ENCODE measurements at regions of chr18 and their contacts with region 1.

Region 1: DNA sequence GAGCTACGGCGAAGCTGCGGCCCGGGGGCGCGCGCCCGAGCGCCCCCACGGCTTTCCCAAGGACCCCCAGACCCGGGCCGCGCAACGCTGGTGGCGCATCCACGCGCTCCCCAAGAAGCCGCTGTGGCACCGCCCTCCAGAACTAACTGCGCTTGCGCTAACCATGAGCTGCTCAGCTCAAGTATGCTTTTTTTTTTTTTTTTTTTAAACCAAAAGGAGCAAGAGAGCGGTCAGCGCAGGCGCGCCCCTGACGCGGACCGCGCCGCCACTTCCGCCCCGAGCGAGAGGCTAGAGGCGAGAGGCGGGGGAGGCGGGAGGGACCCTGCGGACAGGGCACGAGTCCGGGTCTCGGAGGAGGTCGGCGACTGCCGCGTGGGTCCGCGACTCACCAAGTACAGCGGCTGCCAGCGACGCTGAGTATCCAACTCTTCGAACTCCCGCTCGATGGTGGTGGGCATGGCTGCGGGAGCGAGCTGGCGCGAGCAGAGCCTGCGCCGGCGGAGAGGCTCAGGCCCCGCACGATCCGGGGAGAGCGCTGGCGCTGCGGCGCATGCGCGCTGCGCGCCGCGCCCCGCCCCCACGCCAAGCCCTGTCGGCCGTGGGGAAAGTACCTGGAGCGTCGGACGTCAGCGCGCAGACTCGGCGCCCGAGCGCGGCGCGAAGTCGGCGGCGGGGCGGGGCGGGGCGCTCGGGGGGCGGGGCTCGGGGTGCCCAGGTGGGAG is at the start of gene PTPN2:
- DNase-seq: peak; percentile 94
- ATAC-seq: peak; percentile 78
- H3K4me3 Mint-ChIP-seq: peak within 1 kb of the TSS; percentile 94
- H3K27ac Mint-ChIP-seq: peak within 1 kb of the TSS; percentile 93
- H3K4me1 Mint-ChIP-seq: peaks cover 72% of the 10 kb centered on the region
- H3K27me3 Mint-ChIP-seq: no peaks in the 10 kb centered on the region
- CTCF ChIP-seq: no peak
- total RNA-seq, gene PTPN2: 66.4 and 76.5 TPM in 2 replicates

Region 2: DNA sequence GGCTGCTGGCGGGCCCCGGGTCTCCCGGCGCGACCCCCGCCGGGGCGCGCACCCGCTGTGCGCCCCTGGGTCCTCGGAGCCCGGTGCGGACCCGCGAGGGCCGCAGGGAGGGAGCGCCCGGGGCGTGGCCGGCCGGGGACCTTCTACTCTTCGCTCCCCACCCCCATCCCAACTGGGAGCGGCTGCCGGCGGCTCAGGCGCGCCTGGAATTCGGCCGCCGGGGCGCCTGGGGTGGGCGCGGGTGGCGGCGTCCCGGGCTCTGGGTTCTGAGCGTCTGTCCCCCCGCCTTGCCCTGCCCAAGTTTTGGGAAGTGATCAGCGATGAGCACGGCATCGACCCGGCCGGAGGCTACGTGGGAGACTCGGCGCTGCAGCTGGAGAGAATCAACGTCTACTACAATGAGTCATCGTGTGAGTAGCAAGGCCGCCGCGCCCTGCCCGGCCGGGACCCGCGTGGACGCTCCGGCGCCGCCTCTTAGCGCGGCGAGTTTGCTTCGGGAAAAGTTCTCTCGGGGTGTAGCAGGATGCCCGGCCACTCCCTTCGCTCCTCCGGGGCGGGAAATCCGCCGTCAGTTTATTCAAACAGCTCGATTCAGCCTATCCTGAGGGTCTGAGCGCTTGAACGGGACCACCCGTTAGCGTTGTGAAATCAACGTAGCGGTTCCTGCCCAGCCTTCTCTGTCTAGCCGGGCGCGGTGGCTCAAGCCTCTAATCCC is 575.3 kb before region 1 on chr18:
- CTCF ChIA-PET with region 1: no interaction called
- POLR2A ChIA-PET with region 1: interaction called, 4 read pairs
- intact Hi-C with region 1: loop called (anchors 5 kb)
- DNase-seq: peak; percentile 57
- ATAC-seq: peak; percentile 63
- H3K4me3 Mint-ChIP-seq: peak overlapping the region; percentile 85
- H3K27ac Mint-ChIP-seq: peak overlapping the region; percentile 69
- H3K4me1 Mint-ChIP-seq: peaks cover 32% of the 10 kb centered on the region
- H3K27me3 Mint-ChIP-seq: peaks cover 20% of the 10 kb centered on the region
- CTCF ChIP-seq: no peak

Region 3: DNA sequence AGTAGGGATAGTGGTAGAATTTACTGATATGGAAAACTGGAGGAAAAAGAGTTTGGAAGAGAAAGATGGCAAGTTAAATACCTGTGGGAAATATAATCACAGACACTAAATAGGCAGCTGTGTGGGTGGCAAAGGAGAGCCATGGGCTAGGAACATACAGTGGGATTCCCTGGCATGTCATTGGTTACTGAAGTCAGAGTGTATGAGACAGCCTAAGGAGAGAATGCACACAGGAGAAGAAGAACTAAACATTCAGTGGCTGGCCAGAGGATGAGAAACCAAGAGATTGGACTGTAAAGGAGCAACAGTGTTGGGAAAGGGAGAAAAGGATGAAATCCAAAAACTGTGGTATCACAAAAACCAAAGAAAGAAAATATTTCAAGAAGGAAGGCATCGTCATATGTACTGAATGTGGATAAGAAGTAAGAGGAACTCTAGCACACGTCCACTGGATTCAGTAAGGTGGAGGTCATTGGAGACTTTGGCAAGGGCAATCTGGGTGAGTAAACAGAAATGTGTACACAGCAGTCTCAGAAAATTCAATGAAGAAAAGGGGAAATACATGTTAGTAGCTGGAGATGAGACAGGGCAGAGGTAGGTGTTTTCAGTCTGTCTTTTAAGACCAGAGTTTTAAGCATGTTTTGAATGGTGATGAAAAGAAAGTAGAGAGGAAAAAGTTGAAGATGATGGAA is 309.2 kb before region 1 on chr18:
- CTCF ChIA-PET with region 1: no interaction called
- POLR2A ChIA-PET with region 1: no interaction called
- intact Hi-C with region 1: no loop called
- DNase-seq: no peak
- ATAC-seq: no peak
- H3K4me3 Mint-ChIP-seq: no peak overlapping the region
- H3K27ac Mint-ChIP-seq: no peak overlapping the region
- H3K4me1 Mint-ChIP-seq: no peaks in the 10 kb centered on the region
- H3K27me3 Mint-ChIP-seq: peaks cover 4% of the 10 kb centered on the region
- CTCF ChIP-seq: no peak

Region 4: GRCh38 chr18:12639990-12640880 is 243.6 kb before region 1 on chr18:
- CTCF ChIA-PET with region 1: no interaction called
- POLR2A ChIA-PET with region 1: no interaction called
- intact Hi-C with region 1: no loop called
- DNase-seq: no peak
- ATAC-seq: no peak
- H3K4me3 Mint-ChIP-seq: no peak overlapping the region
- H3K27ac Mint-ChIP-seq: no peak overlapping the region
- H3K4me1 Mint-ChIP-seq: no peaks in the 10 kb centered on the region
- H3K27me3 Mint-ChIP-seq: peaks cover 12% of the 10 kb centered on the region
- CTCF ChIP-seq: no peak

Region 5: DNA sequence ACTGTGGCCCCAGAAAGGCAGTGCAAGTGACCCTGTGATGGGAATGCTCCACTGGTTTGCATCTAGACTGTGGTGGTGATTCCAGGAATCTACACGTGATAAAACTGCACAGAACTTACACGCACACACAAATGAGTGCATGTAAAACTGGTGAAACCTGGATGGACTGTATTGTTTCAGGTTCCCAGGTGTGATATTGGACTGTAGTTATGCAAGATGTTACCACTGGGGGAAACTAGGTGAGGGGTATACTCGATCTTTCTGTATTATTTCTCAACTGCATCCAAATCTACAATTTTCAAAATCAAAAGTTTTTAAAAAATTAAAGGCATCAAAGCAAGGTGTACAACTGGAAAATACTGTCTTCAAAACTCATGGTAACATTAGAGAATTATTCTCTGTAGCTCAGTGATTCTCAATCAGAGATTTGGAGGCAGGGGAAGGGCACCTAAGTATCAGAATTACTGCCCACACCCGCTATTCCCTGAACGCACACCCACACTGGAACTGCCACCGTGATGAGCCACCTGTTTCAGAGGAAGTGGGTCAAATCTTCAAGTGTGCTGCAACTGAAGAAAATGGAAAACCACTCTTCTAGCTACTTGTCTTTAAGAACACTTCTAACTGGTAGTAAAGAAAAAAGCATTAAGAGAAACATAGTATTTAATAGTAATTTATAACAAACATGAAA is 26.5 kb before region 1 on chr18:
- CTCF ChIA-PET with region 1: no interaction called
- POLR2A ChIA-PET with region 1: interaction called, 14 read pairs
- intact Hi-C with region 1: loop called (anchors 2 kb)
- DNase-seq: no peak
- ATAC-seq: peak; percentile 25
- H3K4me3 Mint-ChIP-seq: no peak overlapping the region
- H3K27ac Mint-ChIP-seq: peak overlapping the region; percentile 7
- H3K4me1 Mint-ChIP-seq: peaks cover 54% of the 10 kb centered on the region
- H3K27me3 Mint-ChIP-seq: no peaks in the 10 kb centered on the region
- CTCF ChIP-seq: no peak

Region 6: DNA sequence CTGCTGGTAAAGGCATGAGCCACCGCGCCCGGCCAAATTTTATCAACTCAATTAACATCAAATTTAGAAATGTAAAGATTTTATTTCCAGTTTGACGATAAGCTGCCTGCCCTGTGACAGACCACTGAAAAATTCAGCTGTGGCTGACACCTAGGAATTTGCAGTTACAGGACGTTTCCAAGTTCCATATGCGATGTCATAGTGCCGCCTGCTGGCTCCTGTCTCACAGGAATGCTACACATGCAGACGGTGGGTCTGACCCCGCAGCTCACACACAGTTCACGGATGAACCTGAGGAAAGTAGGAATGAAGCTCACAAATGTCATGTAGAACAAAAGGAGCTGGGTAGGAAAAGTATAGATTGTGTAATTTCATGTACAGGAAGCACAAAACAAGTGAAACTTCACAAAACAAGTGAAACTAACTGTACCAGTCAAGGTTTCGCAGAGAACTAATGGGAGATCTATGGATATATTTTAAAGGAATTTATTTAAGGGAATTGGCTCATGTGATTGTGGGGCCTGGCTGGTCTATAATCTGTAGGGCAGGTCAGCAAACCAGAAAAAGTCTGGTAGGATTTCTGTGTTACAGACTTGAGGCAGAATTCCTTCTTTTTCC is 50.7 kb after region 1 on chr18:
- CTCF ChIA-PET with region 1: interaction called, 15 read pairs
- POLR2A ChIA-PET with region 1: interaction called, 4 read pairs
- intact Hi-C with region 1: no loop called
- DNase-seq: peak; percentile 62
- ATAC-seq: peak; percentile 89
- H3K4me3 Mint-ChIP-seq: no peak overlapping the region
- H3K27ac Mint-ChIP-seq: no peak overlapping the region
- H3K4me1 Mint-ChIP-seq: no peaks in the 10 kb centered on the region
- H3K27me3 Mint-ChIP-seq: peaks cover 3% of the 10 kb centered on the region
- CTCF ChIP-seq: no peak

Region 7: DNA sequence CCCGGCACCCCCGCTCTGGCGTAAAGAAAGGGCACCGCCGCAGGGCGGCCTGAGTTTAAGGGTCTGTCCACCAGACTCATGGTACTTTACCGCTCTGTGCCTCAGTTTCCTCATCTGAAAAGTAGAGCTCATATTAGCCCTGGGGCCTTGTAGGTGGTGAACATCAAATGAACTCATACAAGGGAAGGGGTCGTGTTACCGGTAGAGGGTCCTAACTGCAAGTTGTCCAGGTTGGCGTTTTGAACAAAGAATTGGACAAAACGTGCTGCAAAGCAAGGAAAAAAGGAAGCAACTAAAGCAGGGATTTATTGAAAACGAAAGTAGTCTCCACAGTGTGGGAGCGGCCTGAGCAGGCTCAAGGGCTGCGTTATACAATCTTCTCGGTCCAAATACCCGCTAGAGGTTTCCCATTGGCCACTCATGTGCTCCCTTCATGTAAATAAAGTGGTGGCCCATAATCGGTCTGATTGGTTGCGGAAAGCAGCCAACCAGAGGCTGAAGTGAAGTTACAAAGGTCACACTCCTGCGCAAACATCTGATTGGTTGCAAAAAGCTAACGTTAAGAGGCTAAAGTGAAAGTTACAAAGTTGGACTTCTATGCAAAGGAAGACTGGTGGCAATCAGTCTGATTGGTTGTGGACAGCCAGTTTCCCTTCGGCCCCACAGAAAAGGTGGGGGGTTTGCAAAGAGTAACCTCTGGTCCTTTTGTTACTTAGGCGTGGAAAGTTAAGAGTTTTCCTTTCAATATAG is 254.0 kb after region 1 on chr18:
- CTCF ChIA-PET with region 1: no interaction called
- POLR2A ChIA-PET with region 1: no interaction called
- intact Hi-C with region 1: loop called (anchors 1 kb)
- DNase-seq: peak; percentile 43
- ATAC-seq: peak; percentile 87
- H3K4me3 Mint-ChIP-seq: peak overlapping the region; percentile 98
- H3K27ac Mint-ChIP-seq: peak overlapping the region; percentile 97
- H3K4me1 Mint-ChIP-seq: peaks cover 23% of the 10 kb centered on the region
- H3K27me3 Mint-ChIP-seq: no peaks in the 10 kb centered on the region
- CTCF ChIP-seq: no peak

Region 8: GRCh38 chr18:13726232-13726971 is 842.6 kb after region 1 on chr18 and contains the starts of genes FAM210A and RNMT:
- CTCF ChIA-PET with region 1: no interaction called
- POLR2A ChIA-PET with region 1: interaction called, 15 read pairs
- intact Hi-C with region 1: loop called (anchors 2 kb)
- DNase-seq: peak; percentile 86
- ATAC-seq: peak; percentile 93
- H3K4me3 Mint-ChIP-seq: peak within 1 kb of the TSS; percentile 96
- H3K27ac Mint-ChIP-seq: peak within 1 kb of the TSS; percentile 96
- H3K4me1 Mint-ChIP-seq: peaks cover 46% of the 10 kb centered on the region
- H3K27me3 Mint-ChIP-seq: no peaks in the 10 kb centered on the region
- CTCF ChIP-seq: no peak
- total RNA-seq, gene FAM210A: 12.6 and 13.9 TPM in 2 replicates
- total RNA-seq, gene RNMT: 45.5 and 48.5 TPM in 2 replicates

Measured in activated B cell treated with CpG ODN at 0.5 μM for 24 hours (primary cell).